PC-9 (cell line): ENCODE measurements at regions of chr3 and their contacts with region 1.

Region 1: DNA sequence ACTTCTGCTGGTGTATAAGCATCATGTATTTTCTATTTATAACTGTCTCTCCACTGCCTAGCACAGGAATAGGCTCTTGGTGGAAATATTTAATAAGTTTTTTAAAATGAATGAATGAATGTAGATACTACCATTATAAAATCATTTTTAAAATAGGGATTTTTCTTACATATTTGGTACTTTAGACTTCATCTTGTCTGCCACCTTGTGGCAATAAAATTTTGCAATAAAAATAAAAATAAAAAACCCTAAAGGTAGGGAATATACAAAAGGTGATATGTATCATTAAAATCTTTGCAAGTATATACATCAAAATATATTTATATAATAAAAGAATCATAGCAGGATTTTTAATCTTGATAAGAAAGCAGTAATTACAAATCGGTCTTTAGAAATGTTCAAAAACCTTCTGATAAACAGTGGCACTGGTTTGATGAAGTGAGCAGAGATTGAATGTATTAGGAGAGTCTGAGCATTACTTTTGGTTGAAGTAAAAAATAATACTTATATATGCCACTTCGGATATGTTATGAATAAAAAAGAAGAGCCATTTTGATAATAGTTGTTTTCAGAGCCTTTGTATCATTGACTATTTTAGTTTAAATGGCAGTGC is 95.2 kb downstream of the SPATA16 start:
- DNase-seq: no peak
- H3K4me3 ChIP-seq: no peak overlapping the region
- H3K27ac ChIP-seq: no peak overlapping the region
- H3K4me1 ChIP-seq: no peaks in the 10 kb centered on the region
- H3K27me3 ChIP-seq: no peaks in the 10 kb centered on the region
- CTCF ChIP-seq: peak; percentile 84

Region 2: DNA sequence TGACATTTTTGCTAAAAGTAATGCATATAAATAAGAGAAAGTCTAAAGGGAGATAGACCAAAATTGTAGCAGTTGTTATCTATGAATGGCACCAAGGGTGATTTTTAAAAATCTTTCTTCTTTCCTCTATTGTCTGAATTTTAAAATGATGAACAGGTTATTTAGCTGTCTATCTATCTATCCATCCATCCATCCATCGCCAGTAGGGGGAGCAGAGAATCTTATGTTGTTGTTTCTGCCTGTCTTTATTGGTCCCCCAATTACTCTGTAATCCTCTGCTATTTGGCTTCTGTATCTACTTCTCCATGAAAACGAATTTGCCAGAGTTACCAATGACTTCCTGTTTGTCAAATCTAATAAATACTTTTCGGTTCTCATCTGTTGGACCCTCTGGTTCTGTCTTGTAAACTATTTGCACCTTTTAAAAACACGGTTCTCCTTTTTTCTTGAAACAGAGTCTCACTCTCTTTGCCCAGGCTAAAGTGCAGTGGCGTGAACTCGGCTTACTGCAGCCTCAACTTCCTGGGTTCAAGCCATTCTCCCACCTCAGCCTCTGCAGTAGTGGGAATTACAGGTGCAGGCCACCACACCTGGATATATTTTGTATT is 209.4 kb before region 1 on chr3:
- CTCF ChIA-PET with region 1: no interaction called
- POLR2A ChIA-PET with region 1: no interaction called
- intact Hi-C with region 1: loop called (anchors 2 kb)
- DNase-seq: peak in 1 of 2 experiments; percentile 38
- H3K4me3 ChIP-seq: no peak overlapping the region
- H3K27ac ChIP-seq: no peak overlapping the region
- H3K4me1 ChIP-seq: no peaks in the 10 kb centered on the region
- H3K27me3 ChIP-seq: no peaks in the 10 kb centered on the region
- CTCF ChIP-seq: peak; percentile 77

Region 3: DNA sequence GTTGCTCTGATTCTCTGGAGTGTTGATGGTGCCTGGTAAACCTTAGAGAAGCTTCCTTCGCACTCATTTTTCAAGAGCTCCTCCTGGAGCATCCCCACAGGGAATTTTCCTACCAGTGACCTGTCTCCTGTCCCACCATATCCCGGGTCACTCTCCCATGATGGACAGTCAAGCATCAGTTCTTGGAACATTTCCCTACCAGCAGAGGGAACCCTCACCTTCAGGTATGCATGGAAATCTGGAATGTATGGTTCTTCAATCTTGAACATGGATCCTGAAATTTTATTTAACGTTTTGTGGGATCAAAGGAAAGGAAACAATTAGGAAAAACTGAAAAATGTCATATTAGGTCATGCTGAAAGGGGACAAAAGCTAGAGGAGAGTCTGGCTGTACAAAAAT is 58.6 kb before region 1 on chr3:
- CTCF ChIA-PET with region 1: no interaction called
- POLR2A ChIA-PET with region 1: no interaction called
- intact Hi-C with region 1: loop called (anchors 2 kb)
- DNase-seq: no peak
- H3K4me3 ChIP-seq: no peak overlapping the region
- H3K27ac ChIP-seq: no peak overlapping the region
- H3K4me1 ChIP-seq: no peaks in the 10 kb centered on the region
- H3K27me3 ChIP-seq: no peaks in the 10 kb centered on the region
- CTCF ChIP-seq: peak; percentile 53

Region 4: DNA sequence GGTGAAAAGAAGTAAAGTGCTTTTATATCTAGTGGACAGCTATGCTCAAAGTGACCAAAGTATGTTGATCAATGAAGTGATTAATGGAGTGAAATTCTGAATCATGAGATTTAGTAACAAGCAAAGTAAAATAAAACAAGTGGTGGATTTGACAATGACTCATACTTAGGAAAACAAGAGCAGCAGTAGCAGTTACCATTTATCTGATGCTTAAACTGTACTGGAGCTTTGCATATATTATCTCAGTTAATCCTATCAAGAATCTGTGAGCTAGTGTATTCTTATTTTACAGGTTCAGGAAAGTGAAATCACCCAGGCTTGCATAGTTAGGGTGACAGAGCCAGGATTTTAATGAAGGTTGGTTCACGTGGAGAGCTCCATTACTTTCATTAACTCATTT is 145.7 kb after region 1 on chr3:
- CTCF ChIA-PET with region 1: no interaction called
- POLR2A ChIA-PET with region 1: no interaction called
- intact Hi-C with region 1: no loop called
- DNase-seq: no peak
- H3K4me3 ChIP-seq: no peak overlapping the region
- H3K27ac ChIP-seq: no peak overlapping the region
- H3K4me1 ChIP-seq: no peaks in the 10 kb centered on the region
- H3K27me3 ChIP-seq: no peaks in the 10 kb centered on the region
- CTCF ChIP-seq: no peak

Region 5: GRCh38 chr3:173238091-173238490 is 192.2 kb after region 1 on chr3:
- CTCF ChIA-PET with region 1: no interaction called
- POLR2A ChIA-PET with region 1: no interaction called
- intact Hi-C with region 1: no loop called
- DNase-seq: no peak
- H3K4me3 ChIP-seq: no peak overlapping the region
- H3K27ac ChIP-seq: no peak overlapping the region
- H3K4me1 ChIP-seq: no peaks in the 10 kb centered on the region
- H3K27me3 ChIP-seq: no peaks in the 10 kb centered on the region
- CTCF ChIP-seq: no peak